AG04449 (cell line): ENCODE measurements at regions of chr12 and their contacts with region 1.

Region 1: DNA sequence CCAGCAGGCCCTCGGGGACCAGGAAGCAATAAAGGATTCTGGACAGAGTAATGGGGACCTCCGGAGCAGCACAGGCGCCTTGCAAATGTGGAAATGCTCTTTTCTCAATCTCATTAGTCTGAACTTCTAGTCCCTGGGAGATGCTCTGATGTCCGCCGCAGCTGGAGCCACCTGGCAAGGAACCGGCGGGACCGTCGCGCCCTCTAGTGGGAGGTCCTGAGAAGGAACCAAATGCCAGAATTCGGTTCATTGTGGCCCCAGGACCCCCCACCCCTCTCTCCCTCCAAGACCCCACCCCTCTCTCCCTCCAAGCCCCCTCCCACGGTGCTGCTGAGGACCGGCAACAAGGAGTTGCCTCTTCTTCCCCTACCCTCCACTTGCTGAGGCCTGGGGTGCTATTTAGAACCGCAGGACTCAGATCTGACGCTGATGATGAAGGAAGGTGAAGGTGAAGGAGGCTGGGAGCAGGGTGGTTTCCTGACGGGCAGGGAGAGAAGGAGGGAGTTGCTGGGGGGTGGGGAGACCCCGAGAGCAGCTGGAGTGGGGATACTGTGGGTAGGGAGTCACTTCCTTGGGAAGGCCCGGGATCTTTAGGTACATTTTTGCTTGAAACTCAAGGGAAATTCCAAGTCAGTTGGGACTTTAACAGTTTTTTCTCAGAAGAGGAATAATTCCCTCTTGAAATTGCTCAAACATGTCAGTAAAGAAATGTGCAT is 42.5 kb downstream of the SMIM41 start:
- DNase-seq: no peak
- H3K4me3 ChIP-seq: no peak overlapping the region
- CTCF ChIP-seq: peak; percentile 84

Region 2: GRCh38 chr12:51994959-51995358 is 127.0 kb before region 1 on chr12:
- CTCF ChIA-PET with region 1: interaction called, 27 read pairs
- POLR2A ChIA-PET with region 1: no interaction called
- DNase-seq: no peak
- H3K4me3 ChIP-seq: no peak overlapping the region
- CTCF ChIP-seq: no peak

Region 3: DNA sequence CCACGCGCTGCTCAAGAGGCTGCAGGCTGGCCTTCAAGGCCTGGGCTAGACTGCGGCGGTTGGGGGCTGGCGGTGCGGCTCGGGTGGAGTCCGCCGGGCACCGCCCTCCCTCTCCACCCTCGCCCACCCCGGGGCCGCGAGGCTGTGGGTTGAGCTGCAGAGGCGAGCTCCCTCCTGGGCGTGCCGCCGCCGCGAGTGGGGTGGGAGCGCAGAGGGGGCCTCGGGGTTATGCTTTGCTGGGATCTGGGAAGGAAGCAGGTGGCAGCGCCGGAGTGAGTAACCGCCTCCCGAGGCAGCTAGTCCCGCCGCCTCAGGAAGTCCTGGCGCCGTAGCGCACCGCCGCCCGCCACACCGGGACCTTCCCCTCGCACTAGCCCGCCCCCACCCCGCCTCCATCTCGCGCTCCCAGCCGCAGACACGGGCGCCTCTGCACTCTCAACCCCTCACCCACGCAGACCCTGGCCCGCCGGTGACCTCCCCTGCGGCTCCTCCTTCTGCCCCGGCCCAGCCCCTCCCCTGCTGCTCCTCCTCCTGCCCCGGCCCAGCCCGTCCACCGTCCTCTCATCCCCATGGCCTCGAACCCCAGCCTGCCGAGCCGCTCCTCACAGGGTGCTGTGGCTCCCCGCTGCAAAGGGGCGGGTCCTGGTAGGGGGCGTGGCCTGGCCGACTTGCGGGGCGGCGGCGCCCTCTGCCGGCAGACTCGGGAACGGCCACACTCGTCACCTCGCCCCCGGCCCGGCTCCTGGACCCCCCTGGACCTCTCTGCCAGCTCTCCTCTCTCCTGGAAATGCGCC is 98.6 kb before region 1 on chr12:
- CTCF ChIA-PET with region 1: interaction called, 387 read pairs
- POLR2A ChIA-PET with region 1: no interaction called
- DNase-seq: no peak
- H3K4me3 ChIP-seq: peak overlapping the region; percentile 59
- CTCF ChIP-seq: peak; percentile 98

Region 4: DNA sequence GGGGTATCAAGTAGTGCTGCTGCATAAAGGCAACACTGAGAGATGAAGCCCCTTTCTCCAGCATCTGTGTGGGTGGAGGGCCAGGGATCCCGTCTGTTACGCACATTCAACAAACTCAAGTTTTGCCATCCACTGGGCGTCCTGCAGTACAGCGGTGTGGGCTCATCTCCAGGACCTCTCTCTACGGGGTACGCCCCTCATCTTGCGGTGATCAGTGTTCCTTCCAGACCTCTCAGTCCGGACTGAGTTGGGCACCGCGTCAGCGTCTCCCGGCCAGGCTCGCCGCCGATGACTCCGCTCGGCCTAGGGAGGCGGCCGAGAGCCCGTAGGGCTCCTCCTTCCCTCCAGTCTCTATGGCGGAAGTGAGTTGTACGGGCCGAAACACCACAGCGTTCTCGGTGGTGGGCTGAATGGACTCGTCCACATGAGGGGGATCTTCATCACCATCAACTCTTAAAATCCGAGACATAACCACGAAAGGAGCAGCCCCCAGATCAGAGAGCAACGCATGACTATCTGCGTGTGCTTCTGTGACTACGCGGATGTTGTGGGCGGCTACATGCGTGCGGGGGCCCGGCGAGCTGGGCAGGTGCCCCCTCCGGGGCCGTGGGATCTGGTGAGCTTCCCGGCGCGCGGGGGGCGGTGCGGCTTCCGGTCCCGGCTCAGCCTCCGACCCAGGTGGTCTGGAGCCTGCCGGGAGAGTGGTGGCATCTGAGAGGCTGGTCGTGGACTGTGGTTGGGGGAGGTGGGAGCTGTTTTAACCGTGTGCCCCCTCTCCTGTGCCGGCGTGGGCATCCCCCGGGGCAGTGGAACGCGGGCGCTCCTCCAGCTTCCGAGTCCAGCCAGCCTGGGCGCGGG is 52.4 kb before region 1 on chr12 and contains the start of gene ATG101:
- CTCF ChIA-PET with region 1: interaction called, 13 read pairs
- POLR2A ChIA-PET with region 1: interaction called, 4 read pairs
- DNase-seq: peak; percentile 76
- H3K4me3 ChIP-seq: peak within 1 kb of the TSS; percentile 99
- CTCF ChIP-seq: peak; percentile 92

Region 5: DNA sequence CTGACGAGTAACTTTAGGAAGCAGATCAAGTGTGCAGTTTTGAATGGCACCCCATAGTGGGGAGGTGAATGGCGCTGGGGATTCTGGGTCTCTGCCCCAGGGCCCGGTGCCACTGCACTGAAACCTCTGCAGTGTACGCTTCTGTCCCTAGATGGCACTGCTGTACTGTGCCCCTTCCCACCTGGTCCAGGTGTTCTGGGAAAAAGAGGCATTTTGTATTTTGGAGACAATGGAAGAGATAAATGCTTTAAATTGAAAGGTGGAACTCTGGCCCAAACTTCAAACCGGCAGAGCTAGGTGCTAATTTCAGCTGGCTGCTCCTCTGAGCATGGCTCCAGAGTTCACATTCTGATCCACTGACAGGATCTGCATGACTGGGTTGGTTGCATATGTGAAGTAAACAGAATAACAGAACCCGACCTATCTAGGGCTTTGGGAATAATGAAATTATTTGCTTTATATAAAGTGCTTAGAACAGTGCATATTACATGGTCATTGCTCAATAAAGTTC is 17.6 kb after region 1 on chr12:
- CTCF ChIA-PET with region 1: interaction called, 87 read pairs
- POLR2A ChIA-PET with region 1: no interaction called
- DNase-seq: no peak
- H3K4me3 ChIP-seq: no peak overlapping the region
- CTCF ChIP-seq: peak; percentile 58

Region 6: GRCh38 chr12:52358575-52359350 is 236.8 kb after region 1 on chr12:
- CTCF ChIA-PET with region 1: no interaction called
- POLR2A ChIA-PET with region 1: no interaction called
- DNase-seq: no peak
- H3K4me3 ChIP-seq: no peak overlapping the region
- CTCF ChIP-seq: no peak